Aorta (tissue), 5 donors: ENCODE measurements at regions of chr14 and their contacts with region 1.

Region 1: DNA sequence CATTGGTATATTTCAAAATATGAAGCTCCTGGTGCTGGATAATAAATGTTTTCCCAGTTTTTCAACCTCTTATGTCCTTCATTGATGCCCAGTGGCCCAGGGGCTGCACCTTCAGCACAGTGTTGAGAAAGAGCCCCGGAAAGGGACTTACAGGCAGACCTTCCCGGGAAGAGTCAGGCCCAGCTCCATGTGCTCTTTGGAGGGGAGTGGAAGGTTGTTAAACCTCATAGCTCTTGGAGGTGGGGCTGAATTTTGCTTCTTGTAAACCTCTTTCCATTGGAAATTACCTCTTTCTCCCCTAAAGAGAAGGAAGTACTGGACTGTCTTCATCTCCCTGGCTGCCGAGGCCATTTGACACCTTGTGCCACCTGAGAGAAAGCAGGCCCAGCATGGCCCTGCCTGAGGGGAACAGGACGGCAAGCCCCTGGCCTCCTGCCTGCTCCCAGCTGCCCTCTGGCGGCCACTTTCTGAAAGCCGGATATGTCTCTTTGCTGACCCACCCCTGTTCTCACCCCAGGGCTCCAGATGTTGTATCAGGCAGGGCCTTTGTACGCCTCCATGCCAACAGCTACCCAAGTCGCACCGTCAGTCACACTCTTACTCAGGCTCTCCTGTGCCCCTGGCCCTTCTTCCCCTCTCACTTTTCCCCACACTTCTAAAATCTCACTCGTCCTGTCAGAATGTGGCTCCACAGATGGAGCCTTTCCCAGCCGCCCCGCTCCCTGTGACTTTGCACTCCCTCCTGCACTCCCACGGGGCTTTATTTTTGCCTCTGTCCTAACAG is 43.0 kb downstream of the EVL start:
- DNase-seq: peak; percentile 87 to 94
- ATAC-seq: peak; percentile 82
- H3K4me3 ChIP-seq: no peak overlapping the region
- H3K27ac ChIP-seq: no peak overlapping the region
- H3K4me1 ChIP-seq: peaks cover 0 to 5% of the 10 kb centered on the region in 2 donors
- H3K27me3 ChIP-seq: no peaks in the 10 kb centered on the region

Region 2: DNA sequence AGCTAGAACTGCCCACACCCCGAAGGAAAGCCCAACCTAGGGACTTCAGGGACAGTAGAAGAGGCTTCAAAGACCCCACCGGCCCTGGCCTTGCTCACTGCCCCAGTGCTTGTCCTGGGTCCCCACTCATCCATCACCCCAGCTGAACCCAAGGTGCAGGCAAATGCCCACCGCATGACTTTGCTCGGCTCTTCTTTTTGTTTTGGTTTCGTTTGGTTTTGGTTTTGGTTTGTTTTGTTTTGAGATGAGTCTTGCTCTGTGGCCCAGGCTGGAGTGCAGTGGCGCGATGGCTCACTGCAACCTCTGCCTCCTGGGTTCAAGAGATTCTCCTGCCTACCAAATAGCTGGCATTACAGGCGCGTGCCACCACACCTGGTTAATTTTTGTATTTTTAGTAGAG is 513.2 kb before region 1 on chr14:
- intact Hi-C with region 1: no loop called
- DNase-seq: no peak
- ATAC-seq: no peak
- H3K4me3 ChIP-seq: no peak overlapping the region
- H3K27ac ChIP-seq: no peak overlapping the region
- H3K4me1 ChIP-seq: no peaks in the 10 kb centered on the region
- H3K27me3 ChIP-seq: no peaks in the 10 kb centered on the region

Region 3: GRCh38 chr14:100022762-100023451 is 85.3 kb before region 1 on chr14:
- intact Hi-C with region 1: loop called in 1 of 2 experiments (anchors 5 kb)
- DNase-seq: no peak
- ATAC-seq: peak; percentile 59
- H3K4me3 ChIP-seq: no peak overlapping the region
- H3K27ac ChIP-seq: no peak overlapping the region
- H3K4me1 ChIP-seq: peaks cover 0 to 4% of the 10 kb centered on the region in 2 donors
- H3K27me3 ChIP-seq: no peaks in the 10 kb centered on the region

Region 4: GRCh38 chr14:100192672-100193416 is 84.6 kb after region 1 on chr14:
- intact Hi-C with region 1: loop called in 1 of 2 experiments (anchors 5 kb)
- DNase-seq: peak; percentile 99 to 100
- ATAC-seq: peak; percentile 99
- H3K4me3 ChIP-seq: no peak overlapping the region
- H3K27ac ChIP-seq: peak overlapping the region in 1 of 2 donors; percentile 86
- H3K4me1 ChIP-seq: no peaks in the 10 kb centered on the region
- H3K27me3 ChIP-seq: no peaks in the 10 kb centered on the region